ENCODE measurements at regions of chr2 and their contacts with region 1.

Region 1: GRCh38 chr2:230798769-230799399 is 65.9 kb upstream of the ITM2C start:
- DNase-seq: no peak
- H3K4me3 ChIP-seq: no peak overlapping the region
- H3K27ac ChIP-seq: no peak overlapping the region
- H3K4me1 ChIP-seq: peaks cover 8% of the 10 kb centered on the region
- H3K27me3 ChIP-seq: no peaks in the 10 kb centered on the region
- CTCF ChIP-seq: peak; percentile 11 to 47 (median 42)
- EP300 ChIP-seq: no peak
- POLR2A ChIP-seq: no peak

Region 2: GRCh38 chr2:230356084-230356483 is 442.8 kb before region 1 on chr2:
- intact Hi-C with region 1: no loop called
- DNase-seq: no peak
- H3K4me3 ChIP-seq: no peak overlapping the region
- H3K27ac ChIP-seq: no peak overlapping the region
- H3K4me1 ChIP-seq: no peaks in the 10 kb centered on the region
- H3K27me3 ChIP-seq: no peaks in the 10 kb centered on the region
- CTCF ChIP-seq: no peak
- EP300 ChIP-seq: no peak
- POLR2A ChIP-seq: no peak

Region 3: GRCh38 chr2:230712443-230713330 is 86.2 kb before region 1 on chr2 and contains the start of gene CAB39:
- intact Hi-C with region 1: loop called in 2 of 4 experiments (anchors 10 kb)
- DNase-seq: peak; percentile 77 to 91 (median 84)
- H3K4me3 ChIP-seq: peak within 1 kb of the TSS; percentile 94
- H3K27ac ChIP-seq: peak within 1 kb of the TSS; percentile 80 to 87
- H3K4me1 ChIP-seq: peaks cover 7% of the 10 kb centered on the region
- H3K27me3 ChIP-seq: no peaks in the 10 kb centered on the region
- CTCF ChIP-seq: peak; percentile 76 to 95 (median 92)
- EP300 ChIP-seq: no peak
- POLR2A ChIP-seq: peak; percentile 73
- total RNA-seq, gene CAB39: 39.6 to 64.4 (median 52.0) TPM